Panc1 (cell line): ENCODE measurements at regions of chr20 and their contacts with region 1.

Region 1: GRCh38 chr20:31322504-31322903 is 14.1 kb upstream of the DEFB116 start:
- DNase-seq: no peak
- ATAC-seq: no peak
- H3K4me3 ChIP-seq: no peak overlapping the region
- H3K27ac ChIP-seq: no peak overlapping the region
- H3K4me1 ChIP-seq: no peaks in the 10 kb centered on the region
- H3K27me3 ChIP-seq: peaks cover 3% of the 10 kb centered on the region; the same call in 1 of the 2 replicates
- CTCF ChIP-seq: no peak

Region 2: GRCh38 chr20:31341470-31341869 is 19.0 kb after region 1 on chr20:
- CTCF ChIA-PET with region 1: no interaction called
- POLR2A ChIA-PET with region 1: no interaction called
- in situ Hi-C with region 1: no loop called
- intact Hi-C with region 1: no loop called
- DNase-seq: no peak
- ATAC-seq: no peak
- H3K4me3 ChIP-seq: no peak overlapping the region
- H3K27ac ChIP-seq: no peak overlapping the region
- H3K4me1 ChIP-seq: no peaks in the 10 kb centered on the region
- H3K27me3 ChIP-seq: peaks cover 20% of the 10 kb centered on the region
- CTCF ChIP-seq: no peak

Region 3: GRCh38 chr20:31381766-31382165 is 59.3 kb after region 1 on chr20:
- CTCF ChIA-PET with region 1: no interaction called
- POLR2A ChIA-PET with region 1: no interaction called
- in situ Hi-C with region 1: no loop called
- intact Hi-C with region 1: no loop called
- DNase-seq: no peak
- ATAC-seq: no peak
- H3K4me3 ChIP-seq: no peak overlapping the region
- H3K27ac ChIP-seq: no peak overlapping the region
- H3K4me1 ChIP-seq: no peaks in the 10 kb centered on the region
- H3K27me3 ChIP-seq: peaks cover 12% of the 10 kb centered on the region
- CTCF ChIP-seq: no peak

Region 4: GRCh38 chr20:31494131-31494530 is 171.6 kb after region 1 on chr20:
- CTCF ChIA-PET with region 1: interaction called, 4 read pairs
- POLR2A ChIA-PET with region 1: no interaction called
- in situ Hi-C with region 1: no loop called
- intact Hi-C with region 1: loop called (anchors 10 kb)
- DNase-seq: no peak
- ATAC-seq: peak; percentile 57
- H3K4me3 ChIP-seq: no peak overlapping the region
- H3K27ac ChIP-seq: no peak overlapping the region
- H3K4me1 ChIP-seq: no peaks in the 10 kb centered on the region
- H3K27me3 ChIP-seq: peaks cover 4% of the 10 kb centered on the region; the same call in 1 of the 2 replicates
- CTCF ChIP-seq: peak; percentile 83

Region 5: GRCh38 chr20:31869942-31870725 is 547.6 kb after region 1 on chr20 and contains the starts of genes DUSP15 and TTLL9:
- CTCF ChIA-PET with region 1: no interaction called
- POLR2A ChIA-PET with region 1: no interaction called
- in situ Hi-C with region 1: no loop called
- intact Hi-C with region 1: no loop called
- DNase-seq: no peak
- ATAC-seq: peak; percentile 87
- H3K4me3 ChIP-seq: peak within 1 kb of the TSS; percentile 52 to 66
- H3K27ac ChIP-seq: peak within 1 kb of the TSS; percentile 52
- H3K4me1 ChIP-seq: no peaks in the 10 kb centered on the region; the same call in 1 of the 2 replicates
- H3K27me3 ChIP-seq: peaks cover 3% of the 10 kb centered on the region; the same call in 1 of the 2 replicates
- CTCF ChIP-seq: no peak
- total RNA-seq, gene DUSP15: 23.6 TPM
- total RNA-seq, gene TTLL9: 2.1 TPM